CD4-positive, alpha-beta T cell (primary cell): ENCODE measurements at regions of chr2 and their contacts with region 1.

Region 1: GRCh38 chr2:171416009-171416926 is 17.5 kb downstream of the METTL8 start:
- DNase-seq: peak; percentile 62 to 90 (median 77)
- ATAC-seq: peak; percentile 99
- H3K4me3 ChIP-seq: no peak overlapping the region
- H3K4me3 Mint-ChIP-seq: no peak overlapping the region
- H3K27ac ChIP-seq: no peak overlapping the region
- H3K27ac Mint-ChIP-seq: peak overlapping the region; percentile 18
- H3K4me1 ChIP-seq: peaks cover 4% of the 10 kb centered on the region
- H3K4me1 Mint-ChIP-seq: peaks cover 6% of the 10 kb centered on the region
- H3K27me3 ChIP-seq: no peaks in the 10 kb centered on the region
- H3K27me3 Mint-ChIP-seq: no peaks in the 10 kb centered on the region
- CTCF ChIP-seq: peak; percentile 89

Region 2: GRCh38 chr2:170973492-170974303 is 442.6 kb before region 1 on chr2:
- CTCF ChIA-PET with region 1: interaction called, 17 read pairs
- POLR2A ChIA-PET with region 1: interaction called, 15 read pairs
- intact Hi-C with region 1: loop called (anchors 1 kb)
- DNase-seq: peak; percentile 81 to 96 (median 84)
- ATAC-seq: peak; percentile 93
- H3K4me3 ChIP-seq: peak overlapping the region; percentile 86
- H3K4me3 Mint-ChIP-seq: peak overlapping the region; percentile 86
- H3K27ac ChIP-seq: peak overlapping the region in 1 of 2 donors; percentile 41
- H3K27ac Mint-ChIP-seq: peak overlapping the region; percentile 54
- H3K4me1 ChIP-seq: peaks cover 16% of the 10 kb centered on the region
- H3K4me1 Mint-ChIP-seq: peaks cover 12% of the 10 kb centered on the region
- H3K27me3 ChIP-seq: no peaks in the 10 kb centered on the region
- H3K27me3 Mint-ChIP-seq: no peaks in the 10 kb centered on the region
- CTCF ChIP-seq: peak; percentile 72

Region 3: DNA sequence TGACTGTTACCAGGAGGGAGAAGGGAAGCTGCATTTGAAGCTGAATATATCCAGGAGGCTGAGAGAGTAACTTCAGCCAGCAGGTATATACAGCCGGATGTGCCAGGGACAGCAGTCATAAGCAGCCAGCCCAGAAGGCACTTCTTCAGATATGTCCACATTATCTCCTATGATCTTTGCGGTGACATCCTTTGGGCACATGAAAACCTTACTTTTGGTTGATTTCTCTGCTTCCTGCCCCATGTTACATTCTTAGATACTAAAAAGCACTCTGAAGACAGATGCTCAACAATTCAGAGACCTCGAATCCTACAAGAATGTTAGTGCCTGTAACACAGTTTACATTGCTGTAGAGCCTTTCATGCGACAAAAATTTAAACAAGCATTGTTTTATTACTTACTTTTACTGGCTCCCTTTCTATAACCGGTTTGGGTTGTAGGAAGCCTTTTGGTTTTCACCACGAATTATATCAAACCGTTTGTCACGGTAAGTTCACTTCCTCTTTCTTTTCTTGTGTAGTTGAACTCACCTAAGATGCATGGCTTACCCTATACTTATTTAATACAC is 205.3 kb before region 1 on chr2:
- CTCF ChIA-PET with region 1: no interaction called
- POLR2A ChIA-PET with region 1: no interaction called
- intact Hi-C with region 1: loop called in 1 of 2 experiments (anchors 2 kb)
- DNase-seq: peak; percentile 7 to 76 (median 31)
- ATAC-seq: peak; percentile 94
- H3K4me3 ChIP-seq: peak overlapping the region; percentile 50
- H3K4me3 Mint-ChIP-seq: peak overlapping the region; percentile 77
- H3K27ac ChIP-seq: peak overlapping the region in 1 of 2 donors; percentile 66
- H3K27ac Mint-ChIP-seq: peak overlapping the region; percentile 80
- H3K4me1 ChIP-seq: peaks cover 18% of the 10 kb centered on the region
- H3K4me1 Mint-ChIP-seq: peaks cover 25% of the 10 kb centered on the region
- H3K27me3 ChIP-seq: no peaks in the 10 kb centered on the region
- H3K27me3 Mint-ChIP-seq: no peaks in the 10 kb centered on the region
- CTCF ChIP-seq: no peak

Region 4: GRCh38 chr2:171253900-171254655 is 162.2 kb before region 1 on chr2:
- CTCF ChIA-PET with region 1: no interaction called
- POLR2A ChIA-PET with region 1: no interaction called
- intact Hi-C with region 1: loop called in 1 of 2 experiments (anchors 10 kb)
- DNase-seq: no peak
- ATAC-seq: no peak
- H3K4me3 ChIP-seq: no peak overlapping the region
- H3K4me3 Mint-ChIP-seq: no peak overlapping the region
- H3K27ac ChIP-seq: no peak overlapping the region
- H3K27ac Mint-ChIP-seq: no peak overlapping the region
- H3K4me1 ChIP-seq: peaks cover 16% of the 10 kb centered on the region
- H3K4me1 Mint-ChIP-seq: peaks cover 12% of the 10 kb centered on the region
- H3K27me3 ChIP-seq: no peaks in the 10 kb centered on the region
- H3K27me3 Mint-ChIP-seq: no peaks in the 10 kb centered on the region
- CTCF ChIP-seq: no peak

Region 5: DNA sequence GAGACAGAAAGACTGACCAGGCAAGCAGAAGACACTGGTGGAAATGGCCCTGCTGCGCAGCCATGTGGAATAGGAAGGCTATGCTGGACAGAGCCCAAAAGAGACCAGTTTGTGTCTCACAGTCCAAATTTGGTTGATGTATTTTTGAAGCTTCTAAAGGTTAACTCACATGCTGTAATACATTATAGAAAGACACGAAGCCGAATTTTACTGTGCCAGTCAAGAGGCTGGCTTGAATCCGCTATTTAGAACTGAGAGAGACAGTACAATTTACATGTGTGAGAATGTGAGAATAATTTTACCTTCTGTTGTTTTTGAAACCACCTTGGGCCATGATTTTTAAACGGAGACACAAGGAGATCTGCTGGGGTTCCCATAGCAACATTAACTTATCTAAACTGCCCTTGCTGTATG is 96.1 kb before region 1 on chr2:
- CTCF ChIA-PET with region 1: interaction called, 4 read pairs
- POLR2A ChIA-PET with region 1: no interaction called
- intact Hi-C with region 1: loop called in 1 of 2 experiments (anchors 10 kb)
- DNase-seq: no peak
- ATAC-seq: no peak
- H3K4me3 ChIP-seq: no peak overlapping the region
- H3K4me3 Mint-ChIP-seq: peak overlapping the region; percentile 4
- H3K27ac ChIP-seq: no peak overlapping the region
- H3K27ac Mint-ChIP-seq: peak overlapping the region; percentile 73
- H3K4me1 ChIP-seq: peaks cover 35% of the 10 kb centered on the region
- H3K4me1 Mint-ChIP-seq: peaks cover 50% of the 10 kb centered on the region
- H3K27me3 ChIP-seq: no peaks in the 10 kb centered on the region
- H3K27me3 Mint-ChIP-seq: no peaks in the 10 kb centered on the region
- CTCF ChIP-seq: no peak